Activated T-helper 2 cell treated with anti-CD3 and anti-CD28 coated beads, Interferon-gamma antibody, Interleukin-2, Interleukin-4, amounts not matched to agents 10 μg/mL and 5 μg/mL and 100 μg/mL, durations not matched to agents 14 hours and 24 hours and 36 hours (primary cell): ENCODE measurements at regions of chr17 and their contacts with region 1.

Region 1: GRCh38 chr17:50200457-50201275 is 765 bp downstream of the COL1A1 start:
- DNase-seq: peak; percentile 80
- H3K4me3 Mint-ChIP-seq: peak overlapping the region; percentile 80
- H3K27ac Mint-ChIP-seq: peak overlapping the region; percentile 19
- H3K4me1 Mint-ChIP-seq: peaks cover 19% of the 10 kb centered on the region
- H3K27me3 Mint-ChIP-seq: peaks cover 40% of the 10 kb centered on the region

Region 2: GRCh38 chr17:50079334-50080095 is 121.2 kb before region 1 on chr17:
- intact Hi-C with region 1: no loop called
- DNase-seq: no peak
- H3K4me3 Mint-ChIP-seq: no peak overlapping the region
- H3K27ac Mint-ChIP-seq: no peak overlapping the region
- H3K4me1 Mint-ChIP-seq: no peaks in the 10 kb centered on the region
- H3K27me3 Mint-ChIP-seq: no peaks in the 10 kb centered on the region

Region 3: GRCh38 chr17:50114849-50115357 is 85.8 kb before region 1 on chr17:
- intact Hi-C with region 1: loop called (anchors 2 kb)
- DNase-seq: peak; percentile 48
- H3K4me3 Mint-ChIP-seq: no peak overlapping the region
- H3K27ac Mint-ChIP-seq: no peak overlapping the region
- H3K4me1 Mint-ChIP-seq: peaks cover 8% of the 10 kb centered on the region
- H3K27me3 Mint-ChIP-seq: peaks cover 30% of the 10 kb centered on the region

Region 4: GRCh38 chr17:50238601-50239280 is 38.1 kb after region 1 on chr17:
- intact Hi-C with region 1: no loop called
- DNase-seq: no peak
- H3K4me3 Mint-ChIP-seq: no peak overlapping the region
- H3K27ac Mint-ChIP-seq: no peak overlapping the region
- H3K4me1 Mint-ChIP-seq: peaks cover 3% of the 10 kb centered on the region
- H3K27me3 Mint-ChIP-seq: peaks cover 48% of the 10 kb centered on the region

Region 5: GRCh38 chr17:50269477-50270434 is 69.1 kb after region 1 on chr17:
- intact Hi-C with region 1: loop called (anchors 1 kb)
- DNase-seq: peak; percentile 58
- H3K4me3 Mint-ChIP-seq: no peak overlapping the region
- H3K27ac Mint-ChIP-seq: no peak overlapping the region
- H3K4me1 Mint-ChIP-seq: peaks cover 19% of the 10 kb centered on the region
- H3K27me3 Mint-ChIP-seq: peaks cover 2% of the 10 kb centered on the region

Region 6: DNA sequence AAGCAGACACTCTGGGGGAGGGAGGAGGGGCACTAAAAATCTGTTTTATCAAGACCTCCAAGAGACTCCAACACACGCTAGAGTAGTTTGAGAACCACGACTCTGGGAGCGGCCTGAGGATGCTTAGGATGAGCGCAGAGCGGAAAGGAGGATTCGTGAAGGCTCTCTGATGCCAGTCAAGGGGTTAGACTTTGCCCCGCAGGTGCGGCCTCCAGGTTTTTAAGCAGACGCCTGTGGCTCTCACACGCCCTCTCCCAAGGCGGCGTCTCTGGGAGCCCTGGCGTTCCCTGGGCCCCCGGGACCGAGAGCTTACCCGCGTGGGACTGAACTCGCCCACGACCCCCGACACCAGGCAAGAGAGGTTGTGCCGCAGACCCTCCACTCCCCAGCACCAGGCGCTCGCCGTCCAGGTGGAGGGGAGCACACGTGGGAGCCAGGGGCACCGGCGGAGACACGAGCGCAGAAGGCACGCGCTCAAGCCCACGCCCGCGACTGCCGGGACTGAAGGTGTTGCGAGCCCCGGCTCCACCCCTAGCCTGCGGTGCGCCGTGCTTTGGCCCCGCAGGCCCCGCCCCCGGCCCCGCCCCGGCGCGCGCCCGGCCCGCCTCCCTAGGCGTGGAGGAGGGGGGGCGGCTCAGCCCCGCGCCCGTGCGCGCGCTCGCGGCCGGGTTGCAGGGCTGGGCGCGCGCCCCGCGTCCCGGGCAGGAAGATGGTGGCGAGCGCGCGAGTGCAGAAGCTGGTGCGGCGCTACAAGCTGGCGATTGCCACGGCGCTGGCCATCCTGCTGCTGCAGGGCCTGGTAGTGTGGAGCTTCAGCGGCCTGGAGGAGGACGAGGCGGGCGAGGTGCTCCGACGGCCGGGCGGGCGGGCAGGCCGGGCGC is 145.0 kb after region 1 on chr17 and contains the start of gene XYLT2:
- intact Hi-C with region 1: loop called (anchors 5 kb)
- DNase-seq: peak; percentile 86
- H3K4me3 Mint-ChIP-seq: peak within 1 kb of the TSS; percentile 93
- H3K27ac Mint-ChIP-seq: peak within 1 kb of the TSS; percentile 96
- H3K4me1 Mint-ChIP-seq: peaks cover 34% of the 10 kb centered on the region
- H3K27me3 Mint-ChIP-seq: no peaks in the 10 kb centered on the region
- total RNA-seq, gene XYLT2: 134 and 143 TPM in 2 replicates

Region 7: GRCh38 chr17:50478391-50479381 is 278.0 kb after region 1 on chr17 and contains the start of gene RSAD1:
- intact Hi-C with region 1: loop called (anchors 10 kb)
- DNase-seq: peak; percentile 79
- H3K4me3 Mint-ChIP-seq: peak within 1 kb of the TSS; percentile 84
- H3K27ac Mint-ChIP-seq: peak within 1 kb of the TSS; percentile 79
- H3K4me1 Mint-ChIP-seq: peaks cover 18% of the 10 kb centered on the region
- H3K27me3 Mint-ChIP-seq: peaks cover 4% of the 10 kb centered on the region
- total RNA-seq, gene RSAD1: 56.8 and 59.0 TPM in 2 replicates